Activated naive CD8-positive, alpha-beta T cell treated with anti-CD3 and anti-CD28 coated beads, Interleukin-2, amount 10 ng/mL, durations not matched to agents 7 days and 5 days (primary cell): ENCODE measurements at regions of chr11 and their contacts with region 1.

Region 1: DNA sequence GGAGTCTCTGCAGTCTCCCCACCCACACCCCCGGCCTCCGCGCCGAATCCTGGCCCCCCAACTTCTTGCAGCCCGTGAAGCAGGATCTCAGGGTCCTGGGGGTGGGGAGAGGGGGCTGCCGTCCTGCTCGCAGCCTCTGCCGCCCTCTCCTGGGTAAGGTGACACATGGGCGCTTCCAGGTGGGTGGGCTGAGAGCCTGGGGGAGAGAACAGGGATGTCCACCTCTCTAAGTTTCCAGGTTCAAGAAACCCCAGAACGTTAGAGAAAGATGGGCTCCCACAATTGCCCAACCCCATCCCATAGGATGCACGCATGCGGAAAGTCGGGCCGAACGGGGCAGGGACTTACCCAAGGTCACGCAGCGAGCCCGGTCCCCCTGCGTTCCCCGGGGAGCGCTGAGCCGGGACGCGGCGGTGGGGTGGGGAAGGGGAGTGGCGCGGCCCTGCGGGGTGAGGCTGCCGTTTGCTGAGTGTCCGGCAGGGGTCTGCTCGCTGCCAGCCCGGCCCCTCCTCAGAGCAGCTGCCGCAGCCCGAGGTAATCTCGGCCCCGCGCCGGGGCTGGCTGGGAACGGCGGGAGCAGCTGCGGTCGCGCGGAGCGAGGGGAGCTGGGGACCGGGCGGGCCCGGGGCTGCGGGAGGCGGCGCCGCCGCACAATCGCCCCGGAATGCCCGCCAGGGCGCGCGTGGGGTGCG is 705 bp upstream of the CAPN1 start:
- DNase-seq: peak; percentile 77
- ATAC-seq: peak; percentile 63
- H3K4me3 Mint-ChIP-seq: peak overlapping the region; percentile 89
- H3K27ac Mint-ChIP-seq: peak overlapping the region; percentile 77
- H3K4me1 Mint-ChIP-seq: peaks cover 17% of the 10 kb centered on the region
- H3K27me3 Mint-ChIP-seq: peaks cover 4% of the 10 kb centered on the region

Region 2: GRCh38 chr11:65111744-65112414 is 69.1 kb before region 1 on chr11 and contains the start of gene TM7SF2:
- POLR2A ChIA-PET with region 1: interaction called, 30 read pairs
- DNase-seq: peak; percentile 95
- ATAC-seq: peak; percentile 75
- H3K4me3 Mint-ChIP-seq: peak within 1 kb of the TSS; percentile 88
- H3K27ac Mint-ChIP-seq: peak within 1 kb of the TSS; percentile 91
- H3K4me1 Mint-ChIP-seq: peaks cover 30% of the 10 kb centered on the region
- H3K27me3 Mint-ChIP-seq: no peaks in the 10 kb centered on the region
- total RNA-seq, gene TM7SF2: 26.1 to 26.2 TPM

Region 3: DNA sequence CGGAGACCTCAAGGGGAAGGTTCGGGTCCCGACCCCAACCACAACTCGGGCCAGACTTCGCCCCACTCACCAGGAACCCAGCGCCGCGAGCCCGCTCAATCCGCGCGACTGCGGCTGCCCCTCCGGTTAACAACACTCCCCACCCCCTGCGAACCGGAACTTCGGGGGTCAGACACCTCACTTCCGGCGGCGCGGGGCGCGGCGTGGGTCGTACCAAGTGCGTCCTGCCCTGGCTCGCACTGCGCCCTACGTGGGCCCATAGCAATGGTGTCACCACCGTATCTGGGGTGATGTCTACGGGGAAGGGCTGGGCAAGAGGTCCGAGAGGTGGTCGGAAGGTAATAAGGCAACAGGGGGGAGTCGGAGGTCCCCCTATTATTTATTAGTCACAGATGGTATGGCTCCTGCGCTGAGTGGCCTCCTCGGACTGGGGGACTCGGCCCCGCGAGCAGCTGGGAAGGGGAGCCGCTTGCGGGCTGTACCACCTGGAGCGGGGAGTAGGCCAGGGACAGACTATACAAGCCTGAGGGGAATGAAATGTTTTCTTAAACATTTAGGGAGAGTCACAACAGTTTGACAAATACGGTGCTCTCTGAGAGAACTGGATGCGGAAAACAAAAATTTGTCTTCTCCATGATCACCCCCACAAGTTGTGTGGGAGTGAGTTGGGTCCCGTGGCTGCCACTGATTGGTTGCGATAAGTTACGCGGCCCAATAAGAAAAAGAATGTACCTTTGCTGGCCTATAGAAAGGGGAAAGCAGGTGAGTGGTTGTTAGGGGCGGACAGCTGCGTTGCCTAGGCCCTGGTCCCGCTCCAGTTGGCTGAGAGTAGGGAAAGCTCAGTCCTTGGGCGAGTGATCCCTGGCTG is 46.4 kb before region 1 on chr11 and contains the start of gene SYVN1:
- POLR2A ChIA-PET with region 1: interaction called, 29 read pairs
- DNase-seq: peak; percentile 93
- ATAC-seq: peak; percentile 91
- H3K4me3 Mint-ChIP-seq: peak within 1 kb of the TSS; percentile 99
- H3K27ac Mint-ChIP-seq: peak within 1 kb of the TSS; percentile 100
- H3K4me1 Mint-ChIP-seq: peaks cover 29% of the 10 kb centered on the region
- H3K27me3 Mint-ChIP-seq: no peaks in the 10 kb centered on the region
- total RNA-seq, gene SYVN1: 43.4 to 45.1 TPM

Region 4: GRCh38 chr11:65169164-65169641 is 11.8 kb before region 1 on chr11:
- POLR2A ChIA-PET with region 1: interaction called, 11 read pairs
- DNase-seq: no peak
- ATAC-seq: peak; percentile 50
- H3K4me3 Mint-ChIP-seq: no peak overlapping the region
- H3K27ac Mint-ChIP-seq: peak overlapping the region; percentile 79
- H3K4me1 Mint-ChIP-seq: peaks cover 11% of the 10 kb centered on the region
- H3K27me3 Mint-ChIP-seq: peaks cover 3% of the 10 kb centered on the region